WTC11 (cell line): ENCODE measurements at regions of chr9 and their contacts with region 1.

Region 1: GRCh38 chr9:131349881-131350563 is 43.9 kb upstream of the PRRC2B start:
- DNase-seq: peak; percentile 96
- ATAC-seq: peak; percentile 93
- H3K4me3 Mint-ChIP-seq: peak overlapping the region; percentile 62
- H3K27ac Mint-ChIP-seq: peak overlapping the region; percentile 75; the same call in 1 of the 2 replicates
- H3K4me1 Mint-ChIP-seq: peaks cover 7% of the 10 kb centered on the region
- H3K27me3 Mint-ChIP-seq: peaks cover 4% of the 10 kb centered on the region
- CTCF ChIP-seq: peak; percentile 68

Region 2: DNA sequence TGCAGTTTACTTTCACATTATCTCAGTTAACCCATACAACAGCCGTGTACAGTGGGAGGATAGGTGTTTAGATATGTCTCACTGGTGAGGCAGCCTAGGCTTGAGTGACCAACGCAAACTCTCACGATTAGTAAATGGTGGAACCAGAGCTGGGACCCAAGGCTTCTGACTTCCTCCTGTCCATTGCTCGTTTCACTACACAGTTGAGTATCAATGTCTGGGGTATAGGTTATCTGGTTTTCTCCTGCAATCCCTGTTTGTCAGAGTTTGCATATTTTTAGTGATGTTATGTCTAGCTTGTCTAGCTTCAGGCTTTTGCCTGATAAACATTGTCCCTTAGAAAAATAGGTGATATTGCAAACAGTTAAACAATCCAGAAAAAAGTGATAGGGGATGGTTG is 162.1 kb before region 1 on chr9:
- CTCF ChIA-PET with region 1: no interaction called
- POLR2A ChIA-PET with region 1: no interaction called
- DNase-seq: no peak
- ATAC-seq: no peak
- H3K4me3 Mint-ChIP-seq: no peak overlapping the region
- H3K27ac Mint-ChIP-seq: no peak overlapping the region
- H3K4me1 Mint-ChIP-seq: no peaks in the 10 kb centered on the region
- H3K27me3 Mint-ChIP-seq: no peaks in the 10 kb centered on the region
- CTCF ChIP-seq: no peak

Region 3: DNA sequence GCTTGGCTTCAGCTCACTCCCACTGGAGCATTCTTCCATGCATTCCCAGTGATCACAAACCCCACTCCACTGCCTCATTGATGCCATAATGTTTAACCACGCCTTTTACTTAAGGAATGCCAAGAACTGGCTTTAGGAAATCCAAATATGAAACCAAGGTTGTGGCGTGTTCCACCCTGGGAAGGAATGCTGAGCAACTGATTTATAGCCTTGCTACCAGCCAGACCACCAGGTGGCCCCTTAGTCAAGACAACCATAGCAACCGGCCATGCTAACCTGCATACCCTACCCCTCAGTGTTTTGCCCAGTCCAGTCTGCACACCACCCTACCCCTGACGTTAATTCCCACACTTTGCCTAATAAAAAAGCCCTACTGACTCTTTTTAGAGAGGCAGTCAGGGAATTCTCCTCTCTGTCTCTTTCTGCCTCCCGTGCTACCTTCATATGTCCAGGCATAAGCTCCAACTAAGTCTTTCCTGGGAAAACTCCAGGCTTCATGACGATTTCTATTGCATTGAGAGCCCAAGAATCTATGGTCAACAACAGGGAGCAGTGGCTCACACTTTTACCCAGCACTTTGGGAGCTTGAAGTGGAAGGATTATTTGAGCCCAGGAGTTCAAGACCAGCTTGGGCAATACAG is 16.9 kb after region 1 on chr9:
- CTCF ChIA-PET with region 1: interaction called, 36 read pairs
- POLR2A ChIA-PET with region 1: interaction called, 4 read pairs
- DNase-seq: peak; percentile 58
- ATAC-seq: peak; percentile 97
- H3K4me3 Mint-ChIP-seq: no peak overlapping the region
- H3K27ac Mint-ChIP-seq: peak overlapping the region; percentile 59
- H3K4me1 Mint-ChIP-seq: peaks cover 9% of the 10 kb centered on the region
- H3K27me3 Mint-ChIP-seq: no peaks in the 10 kb centered on the region; the same call in 1 of the 2 replicates
- CTCF ChIP-seq: no peak

Region 4: DNA sequence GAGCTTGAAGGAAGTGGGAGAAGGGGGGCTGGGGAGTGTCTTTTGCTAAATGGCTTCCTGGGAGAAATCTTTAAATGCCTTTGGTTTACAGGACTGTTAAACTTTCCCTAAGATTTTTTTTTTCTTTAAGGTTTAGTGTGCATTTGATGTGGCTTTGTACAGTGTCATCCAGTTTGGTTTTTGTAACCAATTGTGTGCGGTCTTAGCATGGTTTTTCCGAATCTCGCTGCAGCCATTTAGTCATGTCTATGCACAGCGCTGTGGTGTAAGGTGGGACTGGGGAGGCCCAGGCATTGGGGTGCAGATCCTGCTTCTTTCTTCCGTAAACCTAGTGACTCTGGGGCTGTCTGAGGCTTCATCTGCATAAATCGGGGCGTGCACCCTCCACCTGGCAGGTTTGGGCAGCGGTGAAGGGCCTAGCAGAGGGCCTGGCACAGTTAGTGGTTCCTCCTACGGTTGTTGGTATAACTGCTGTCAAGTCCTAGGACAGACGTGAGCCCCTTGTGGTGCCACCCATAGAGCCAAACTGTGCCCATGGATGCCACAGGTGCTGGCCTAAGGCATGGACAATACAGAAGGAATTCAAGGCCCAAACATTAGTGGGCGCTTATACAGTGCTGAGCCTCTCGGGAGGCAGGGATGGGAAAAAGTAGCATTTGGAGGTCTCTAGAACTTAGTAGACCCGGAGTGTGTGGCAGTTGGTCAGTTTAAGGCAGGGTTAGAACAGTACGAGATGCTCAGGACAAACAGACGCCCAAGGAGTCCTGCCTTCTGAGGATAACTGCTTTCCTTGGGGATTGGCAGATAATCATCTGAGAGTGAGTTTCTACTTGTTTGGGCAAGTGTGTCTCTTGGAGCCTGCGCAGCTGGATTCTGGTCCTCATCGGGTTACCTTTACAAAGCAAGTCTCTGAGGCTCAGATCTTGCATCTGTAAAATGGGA is 45.4 kb after region 1 on chr9:
- CTCF ChIA-PET with region 1: interaction called, 10 read pairs
- POLR2A ChIA-PET with region 1: no interaction called
- DNase-seq: peak; percentile 60
- ATAC-seq: peak; percentile 9
- H3K4me3 Mint-ChIP-seq: peak overlapping the region; percentile 92
- H3K27ac Mint-ChIP-seq: peak overlapping the region; percentile 96
- H3K4me1 Mint-ChIP-seq: peaks cover 66% of the 10 kb centered on the region
- H3K27me3 Mint-ChIP-seq: no peaks in the 10 kb centered on the region
- CTCF ChIP-seq: no peak

Region 5: DNA sequence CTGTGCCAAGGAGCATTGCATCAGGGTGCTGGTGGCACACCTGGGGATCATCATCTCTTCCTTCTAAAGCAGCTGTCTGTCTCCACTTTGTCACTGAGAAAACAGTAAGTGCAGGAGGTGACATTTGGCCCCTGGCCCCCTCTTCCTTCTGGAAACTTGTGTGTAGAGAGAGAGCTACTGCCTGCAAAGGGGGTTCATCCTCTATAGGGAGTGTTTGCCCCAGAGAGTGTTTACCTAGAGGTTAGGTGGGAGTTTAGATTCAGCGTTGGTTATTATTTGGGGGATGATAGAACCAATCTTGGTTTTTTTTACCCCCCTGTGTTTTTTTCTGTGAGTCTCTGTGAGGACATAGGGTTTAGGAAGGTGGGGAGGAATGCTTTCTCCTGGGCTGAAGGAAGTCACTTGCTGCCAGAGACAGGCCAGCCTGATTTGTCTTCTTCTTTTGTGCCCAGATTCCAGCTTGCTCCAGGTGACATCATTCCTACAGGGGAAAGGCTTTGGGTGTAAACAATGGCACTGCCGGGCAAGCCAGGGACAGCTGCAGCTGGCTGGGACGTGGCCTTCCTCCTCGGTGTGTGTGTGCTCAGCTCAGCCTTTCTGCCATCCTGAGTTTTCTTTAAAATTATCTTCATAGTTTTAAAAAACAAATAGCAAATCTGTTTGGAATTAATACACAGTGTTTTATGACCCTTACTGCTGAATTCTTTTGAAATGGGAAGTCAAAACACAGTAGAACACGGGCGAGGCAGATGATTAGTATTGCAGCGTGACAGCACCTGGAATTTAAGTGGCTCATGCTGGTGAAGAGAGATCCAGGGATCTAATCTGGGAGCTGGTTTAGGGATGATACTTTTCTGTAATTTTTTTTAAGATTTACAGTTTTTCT is 68.4 kb after region 1 on chr9:
- CTCF ChIA-PET with region 1: interaction called, 11 read pairs
- POLR2A ChIA-PET with region 1: no interaction called
- DNase-seq: no peak
- ATAC-seq: peak; percentile 6; the same call in 1 of the 2 replicates
- H3K4me3 Mint-ChIP-seq: no peak overlapping the region
- H3K27ac Mint-ChIP-seq: peak overlapping the region; percentile 96
- H3K4me1 Mint-ChIP-seq: peaks cover 78% of the 10 kb centered on the region
- H3K27me3 Mint-ChIP-seq: no peaks in the 10 kb centered on the region
- CTCF ChIP-seq: no peak

Region 6: GRCh38 chr9:131546336-131547084 is 196.5 kb after region 1 on chr9:
- CTCF ChIA-PET with region 1: interaction called, 11 read pairs
- POLR2A ChIA-PET with region 1: no interaction called
- DNase-seq: peak; percentile 69
- ATAC-seq: peak; percentile 45
- H3K4me3 Mint-ChIP-seq: peak overlapping the region; percentile 68
- H3K27ac Mint-ChIP-seq: no peak overlapping the region
- H3K4me1 Mint-ChIP-seq: peaks cover 7% of the 10 kb centered on the region
- H3K27me3 Mint-ChIP-seq: peaks cover 79% of the 10 kb centered on the region
- CTCF ChIP-seq: no peak